IMR-90 (cell line): ENCODE measurements at regions of chr3 and their contacts with region 1.

Region 1: GRCh38 chr3:184154885-184155643 is at the start of gene DVL3:
- DNase-seq: peak; percentile 52
- ATAC-seq: peak; percentile 85
- H3K4me3 ChIP-seq: peak within 1 kb of the TSS; percentile 99
- H3K27ac ChIP-seq: peak within 1 kb of the TSS; percentile 96
- H3K4me1 ChIP-seq: peaks cover 9% of the 10 kb centered on the region
- H3K27me3 ChIP-seq: no peaks in the 10 kb centered on the region
- CTCF ChIP-seq: no peak
- POLR2A ChIP-seq: peak; percentile 59
- RAD21 ChIP-seq: no peak
- total RNA-seq, gene DVL3: 23.3 and 24.2 TPM in 2 replicates

Region 2: GRCh38 chr3:183629546-183630301 is 525.3 kb before region 1 on chr3:
- CTCF ChIA-PET with region 1: no interaction called
- POLR2A ChIA-PET with region 1: no interaction called
- dilution Hi-C with region 1: no loop called
- in situ Hi-C with region 1: no loop called
- intact Hi-C with region 1: no loop called
- DNase-seq: no peak
- ATAC-seq: no peak
- H3K4me3 ChIP-seq: no peak overlapping the region
- H3K27ac ChIP-seq: no peak overlapping the region
- H3K4me1 ChIP-seq: no peaks in the 10 kb centered on the region
- H3K27me3 ChIP-seq: peaks cover 3% of the 10 kb centered on the region; the same call in 1 of the 2 replicates
- CTCF ChIP-seq: no peak
- POLR2A ChIP-seq: no peak
- RAD21 ChIP-seq: no peak

Region 3: DNA sequence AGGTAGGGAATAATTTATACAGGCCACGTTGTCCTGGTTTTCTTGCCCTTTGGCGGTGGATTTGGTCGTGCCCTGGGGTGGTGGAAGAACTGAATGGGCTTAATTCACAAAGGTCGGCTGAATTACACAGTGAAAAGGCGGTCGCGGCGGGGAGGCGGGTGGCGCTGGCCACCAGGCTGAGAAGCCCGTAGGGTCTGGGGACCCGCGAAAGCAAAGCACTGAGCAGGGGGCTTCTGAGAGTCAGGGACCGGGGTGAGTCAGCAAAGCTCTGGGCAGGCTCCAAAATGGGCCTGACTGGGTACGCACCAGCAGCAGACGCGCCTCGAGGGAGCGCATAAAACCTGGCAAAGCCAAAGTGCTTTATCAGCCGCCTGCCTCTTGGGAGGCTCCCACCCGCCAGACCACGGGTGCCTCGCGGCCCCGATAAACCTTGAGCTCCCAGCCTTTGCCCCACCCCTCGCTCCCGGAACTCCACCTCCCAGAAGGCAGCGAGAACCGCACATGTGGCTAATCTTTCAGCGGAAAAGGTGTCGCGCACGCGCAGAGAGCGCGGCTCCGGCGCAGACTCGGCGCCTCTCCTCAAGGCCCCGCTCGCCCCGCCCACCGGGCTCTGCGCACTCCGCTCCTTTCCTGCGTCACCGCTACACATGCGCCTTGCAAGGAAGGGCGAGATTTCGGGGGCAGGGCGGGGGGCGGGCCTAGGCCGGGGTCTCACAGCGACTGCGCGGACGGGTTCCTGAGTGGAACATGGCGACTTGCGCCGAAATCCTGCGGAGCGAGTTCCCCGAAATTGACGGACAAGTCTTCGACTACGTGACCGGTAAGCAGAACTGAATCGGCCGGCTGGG is 30.6 kb after region 1 on chr3 and contains the start of gene ABCF3:
- CTCF ChIA-PET with region 1: interaction called, 11 read pairs
- POLR2A ChIA-PET with region 1: interaction called, 6 read pairs
- dilution Hi-C with region 1: no loop called
- in situ Hi-C with region 1: no loop called
- intact Hi-C with region 1: no loop called
- DNase-seq: peak; percentile 98
- ATAC-seq: peak; percentile 99
- H3K4me3 ChIP-seq: peak within 1 kb of the TSS; percentile 67
- H3K27ac ChIP-seq: peak within 1 kb of the TSS; percentile 73
- H3K4me1 ChIP-seq: peaks cover 3% of the 10 kb centered on the region; the same call in 1 of the 2 replicates
- H3K27me3 ChIP-seq: no peaks in the 10 kb centered on the region
- CTCF ChIP-seq: no peak
- POLR2A ChIP-seq: peak; percentile 60; the same call in 1 of the 2 replicates
- RAD21 ChIP-seq: no peak
- total RNA-seq, gene ABCF3: 35.0 and 36.9 TPM in 2 replicates

Region 4: GRCh38 chr3:184196536-184196935 is 41.5 kb after region 1 on chr3:
- CTCF ChIA-PET with region 1: no interaction called
- POLR2A ChIA-PET with region 1: no interaction called
- dilution Hi-C with region 1: no loop called
- in situ Hi-C with region 1: no loop called
- intact Hi-C with region 1: no loop called
- DNase-seq: no peak
- ATAC-seq: no peak
- H3K4me3 ChIP-seq: no peak overlapping the region
- H3K27ac ChIP-seq: no peak overlapping the region
- H3K4me1 ChIP-seq: no peaks in the 10 kb centered on the region
- H3K27me3 ChIP-seq: no peaks in the 10 kb centered on the region
- CTCF ChIP-seq: no peak
- POLR2A ChIP-seq: no peak
- RAD21 ChIP-seq: no peak

Region 5: GRCh38 chr3:184602416-184603150 is 447.5 kb after region 1 on chr3:
- CTCF ChIA-PET with region 1: no interaction called
- POLR2A ChIA-PET with region 1: no interaction called
- dilution Hi-C with region 1: no loop called
- in situ Hi-C with region 1: no loop called
- intact Hi-C with region 1: no loop called
- DNase-seq: no peak
- ATAC-seq: no peak; the same call in 1 of the 2 replicates
- H3K4me3 ChIP-seq: no peak overlapping the region
- H3K27ac ChIP-seq: no peak overlapping the region
- H3K4me1 ChIP-seq: no peaks in the 10 kb centered on the region; the same call in 1 of the 2 replicates
- H3K27me3 ChIP-seq: peaks cover 61% of the 10 kb centered on the region
- CTCF ChIP-seq: no peak
- POLR2A ChIP-seq: no peak
- RAD21 ChIP-seq: no peak